ENCODE measurements at regions of chr18 and their contacts with region 1.

Region 1: GRCh38 chr18:62425465-62426195 is 97.2 kb upstream of the ZCCHC2 start:
- DNase-seq: peak; percentile 78
- ATAC-seq: peak; percentile 93

Region 2: DNA sequence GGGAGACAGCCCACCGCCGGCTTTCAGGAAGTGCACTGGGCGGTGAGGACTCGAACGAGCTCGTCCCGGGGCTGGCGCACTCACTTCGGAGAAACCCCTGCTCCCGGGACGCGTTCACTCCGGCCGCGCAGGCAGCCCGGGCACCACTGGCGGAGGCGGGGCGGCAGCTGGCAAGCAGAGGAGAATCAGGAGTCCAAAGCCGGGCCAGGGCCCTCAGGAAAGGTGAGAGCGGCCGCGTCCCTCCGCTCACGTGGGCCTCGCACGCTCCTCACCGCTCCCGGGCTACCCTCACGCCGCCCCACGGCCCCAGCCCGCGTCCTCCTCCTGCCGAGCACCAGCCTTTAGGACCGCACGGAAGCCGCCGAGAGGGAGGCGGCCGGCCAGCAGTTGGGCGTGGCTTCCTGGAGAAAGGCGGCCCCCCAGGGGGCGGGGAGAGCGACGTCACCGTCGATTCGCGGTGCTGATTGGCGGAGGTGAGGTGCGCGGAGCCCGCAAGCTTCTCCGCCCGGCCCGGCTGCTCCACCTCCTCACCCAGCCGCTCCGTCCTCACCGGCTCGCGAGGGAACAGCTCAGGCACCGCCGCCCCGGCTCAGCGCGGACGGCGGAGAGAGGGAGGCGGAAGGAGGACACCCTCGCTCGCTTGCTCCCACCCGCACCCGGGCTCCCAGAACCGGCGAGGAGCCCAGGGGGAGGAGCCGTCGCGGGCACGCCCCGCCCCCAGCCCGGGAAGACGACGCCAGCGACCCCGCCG is 97.0 kb after region 1 on chr18 and contains the start of gene ZCCHC2:
- intact Hi-C with region 1: loop called (anchors 5 kb)
- DNase-seq: peak; percentile 98
- ATAC-seq: peak; percentile 87 to 89
- total RNA-seq, gene ZCCHC2: 19.0 to 24.1 TPM

Region 3: DNA sequence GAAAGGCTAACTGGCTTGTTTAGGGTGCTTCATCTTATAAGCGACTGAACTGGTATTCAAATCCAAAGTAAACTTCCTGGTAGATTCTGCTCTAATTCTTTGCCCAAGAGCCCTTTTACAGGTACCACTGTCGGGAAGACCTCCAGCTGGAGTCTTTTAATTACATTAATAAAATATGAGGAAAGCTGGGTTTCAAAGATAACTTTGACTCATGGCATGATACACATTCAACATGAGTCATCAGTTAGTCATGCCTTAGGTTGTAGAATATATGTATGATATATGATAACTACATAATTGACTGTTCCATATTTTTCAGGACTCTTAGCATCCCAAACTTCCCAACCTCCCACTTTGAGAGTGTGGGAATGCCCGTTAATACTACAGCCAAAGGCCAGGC is 129.5 kb after region 1 on chr18:
- intact Hi-C with region 1: no loop called
- DNase-seq: no peak
- ATAC-seq: no peak

Region 4: GRCh38 chr18:62566199-62566598 is 140.6 kb after region 1 on chr18:
- intact Hi-C with region 1: loop called in 1 of 2 experiments (anchors 5 kb)
- DNase-seq: peak; percentile 40
- ATAC-seq: peak in 1 of 2 donors; percentile 29

Region 5: DNA sequence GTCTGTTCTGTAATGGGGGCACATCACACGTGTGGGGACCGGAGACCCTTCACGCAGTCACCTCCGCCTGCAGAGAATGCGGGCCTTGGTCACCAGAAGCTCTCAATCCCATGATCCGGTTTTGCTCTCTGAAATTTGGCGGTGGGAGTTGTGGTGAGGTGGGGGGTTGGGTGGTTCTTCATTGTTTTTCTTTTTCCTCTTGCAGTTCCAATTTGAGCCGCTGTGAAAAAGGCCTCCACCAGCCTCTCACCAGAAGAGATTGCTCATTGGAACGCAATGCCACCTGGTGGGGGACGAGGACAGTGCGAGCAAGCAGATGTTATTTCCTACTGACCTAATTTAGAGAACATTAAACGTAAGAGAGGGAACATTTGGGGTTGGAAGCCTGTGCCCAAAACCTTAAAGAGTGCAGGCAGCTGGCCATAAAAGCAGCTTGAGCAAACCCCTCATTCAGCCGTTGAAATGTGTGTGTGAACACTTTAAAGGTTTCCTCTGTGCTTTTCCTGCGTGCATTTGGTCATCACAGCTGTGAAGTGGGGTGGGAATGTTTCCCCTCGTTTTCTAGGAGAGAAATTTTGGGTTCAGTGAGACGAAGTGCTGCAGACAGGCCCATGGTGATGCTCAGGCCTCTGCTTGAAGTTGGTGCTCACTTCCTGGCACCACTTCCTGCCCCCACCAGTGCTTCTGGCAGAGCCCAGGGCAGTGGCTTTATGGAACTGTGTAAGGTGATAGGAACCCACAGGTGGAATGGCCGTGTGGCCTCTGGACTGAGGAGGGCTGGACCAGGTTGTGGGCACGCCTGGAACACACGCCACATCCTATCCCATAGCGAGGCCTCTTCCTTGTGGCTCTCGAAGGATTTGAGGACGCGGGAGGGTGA is 158.9 kb after region 1 on chr18:
- intact Hi-C with region 1: loop called in 1 of 2 experiments (anchors 2 kb)
- DNase-seq: peak; percentile 85
- ATAC-seq: peak; percentile 88 to 93